ENCODE measurements at regions of chr1 and their contacts with region 1.

Region 1: GRCh38 chr1:17419626-17420328 is 19.7 kb downstream of the RCC2 start:
- DNase-seq: peak; percentile 71
- H3K4me3 Mint-ChIP-seq: no peak overlapping the region
- H3K27ac Mint-ChIP-seq: peak overlapping the region; percentile 15
- H3K4me1 Mint-ChIP-seq: peaks cover 2% of the 10 kb centered on the region
- H3K27me3 Mint-ChIP-seq: no peaks in the 10 kb centered on the region

Region 2: DNA sequence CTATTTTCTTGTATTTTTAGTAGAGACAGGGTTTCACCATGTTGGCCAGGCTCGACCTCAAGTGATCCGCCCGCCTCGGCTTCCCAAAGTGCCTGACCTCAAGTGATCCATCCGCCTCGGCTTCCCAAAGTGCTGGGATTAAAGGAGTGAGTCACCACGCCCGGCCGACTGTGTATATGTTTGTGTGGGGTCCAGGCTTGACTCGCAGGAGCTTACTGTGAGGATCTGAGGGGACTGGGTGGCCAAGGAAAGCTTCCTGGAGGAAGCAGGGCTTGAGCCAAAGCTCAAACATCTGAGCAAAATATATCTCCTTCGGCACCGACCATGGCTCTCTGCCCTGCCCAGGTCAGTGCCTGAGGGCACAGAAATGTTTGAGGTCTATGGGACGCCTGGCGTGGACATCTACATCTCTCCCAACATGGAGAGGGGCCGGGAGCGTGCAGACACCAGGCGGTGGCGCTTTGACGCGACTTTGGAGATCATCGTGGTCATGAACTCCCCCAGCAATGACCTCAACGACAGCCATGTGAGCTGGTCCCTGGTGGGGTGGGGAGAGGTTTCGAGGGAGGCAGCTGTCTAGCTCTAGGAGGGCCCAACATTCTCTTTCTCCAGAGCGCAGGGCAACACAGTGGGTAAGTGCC is 160.4 kb before region 1 on chr1:
- CTCF ChIA-PET with region 1: no interaction called
- POLR2A ChIA-PET with region 1: no interaction called
- intact Hi-C with region 1: no loop called
- DNase-seq: no peak
- H3K4me3 Mint-ChIP-seq: no peak overlapping the region
- H3K27ac Mint-ChIP-seq: no peak overlapping the region
- H3K4me1 Mint-ChIP-seq: no peaks in the 10 kb centered on the region
- H3K27me3 Mint-ChIP-seq: peaks cover 6% of the 10 kb centered on the region

Region 3: DNA sequence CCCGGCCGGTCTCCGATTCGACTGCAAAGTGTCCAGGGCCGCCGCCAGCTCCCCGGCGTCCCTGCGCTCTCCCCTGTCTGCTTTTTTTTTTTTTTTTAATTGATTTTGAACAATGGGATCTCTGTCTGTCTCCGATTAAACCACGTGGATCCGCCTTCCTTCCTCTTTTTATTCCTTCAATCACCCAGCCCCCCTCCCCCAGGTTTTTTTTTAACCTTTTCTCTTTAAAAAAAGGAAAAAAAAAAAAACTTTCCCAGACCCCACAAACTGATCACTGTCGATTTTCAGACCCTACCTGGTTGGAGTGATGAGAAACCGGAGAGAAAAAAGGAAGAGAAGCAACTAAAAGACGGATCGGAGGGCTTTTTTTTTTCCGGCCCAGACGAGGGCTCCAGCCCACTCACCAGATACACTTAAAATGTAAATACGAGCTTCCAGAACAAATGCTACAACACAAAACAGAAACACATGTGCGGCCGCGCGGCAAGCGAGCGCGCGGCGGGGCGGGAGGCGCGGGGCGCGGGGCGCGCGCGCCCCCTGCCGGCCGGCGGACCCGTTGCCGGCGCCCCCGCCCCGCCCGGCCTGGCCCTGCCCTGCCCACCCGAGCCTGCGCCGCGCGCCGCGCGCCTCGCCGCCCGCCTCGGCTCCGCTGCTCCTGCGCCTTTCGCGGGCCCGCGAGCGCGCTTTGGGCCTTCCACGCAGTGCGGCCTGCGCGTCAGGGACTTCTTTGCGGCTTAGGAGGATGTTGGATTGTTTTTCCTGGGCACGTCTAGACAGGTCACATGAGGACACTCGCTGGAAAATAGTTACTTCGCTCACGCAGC is 19.7 kb after region 1 on chr1 and contains the start of gene RCC2:
- CTCF ChIA-PET with region 1: interaction called, 10 read pairs
- POLR2A ChIA-PET with region 1: no interaction called
- intact Hi-C with region 1: loop called (anchors 2 kb)
- DNase-seq: peak; percentile 79
- H3K4me3 Mint-ChIP-seq: peak within 1 kb of the TSS; percentile 88
- H3K27ac Mint-ChIP-seq: peak within 1 kb of the TSS; percentile 95
- H3K4me1 Mint-ChIP-seq: peaks cover 43% of the 10 kb centered on the region
- H3K27me3 Mint-ChIP-seq: no peaks in the 10 kb centered on the region
- total RNA-seq, gene RCC2: 90.6 to 91.0 TPM

Region 4: DNA sequence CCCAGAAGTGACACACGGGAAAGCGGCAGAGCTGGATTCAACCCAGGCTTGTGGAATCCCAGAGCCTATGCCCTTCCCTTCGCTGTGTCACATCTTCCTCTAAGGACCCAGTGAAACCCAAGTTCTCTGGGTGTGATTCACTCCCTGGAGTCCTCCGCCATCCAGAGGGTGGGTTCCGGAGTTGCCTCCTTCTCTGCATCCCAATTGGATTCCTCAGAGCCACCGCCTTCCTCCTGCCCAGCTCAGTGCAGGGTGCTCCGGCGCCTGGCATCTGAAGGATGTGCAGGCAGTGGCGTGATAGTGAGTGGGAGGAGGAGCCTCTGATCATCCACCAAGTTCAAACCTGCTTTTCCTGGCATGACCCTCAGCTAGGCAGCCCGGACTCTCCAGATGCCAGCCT is 40.5 kb after region 1 on chr1:
- CTCF ChIA-PET with region 1: no interaction called
- POLR2A ChIA-PET with region 1: no interaction called
- intact Hi-C with region 1: no loop called
- DNase-seq: no peak
- H3K4me3 Mint-ChIP-seq: no peak overlapping the region
- H3K27ac Mint-ChIP-seq: no peak overlapping the region
- H3K4me1 Mint-ChIP-seq: no peaks in the 10 kb centered on the region
- H3K27me3 Mint-ChIP-seq: peaks cover 2% of the 10 kb centered on the region

Region 5: DNA sequence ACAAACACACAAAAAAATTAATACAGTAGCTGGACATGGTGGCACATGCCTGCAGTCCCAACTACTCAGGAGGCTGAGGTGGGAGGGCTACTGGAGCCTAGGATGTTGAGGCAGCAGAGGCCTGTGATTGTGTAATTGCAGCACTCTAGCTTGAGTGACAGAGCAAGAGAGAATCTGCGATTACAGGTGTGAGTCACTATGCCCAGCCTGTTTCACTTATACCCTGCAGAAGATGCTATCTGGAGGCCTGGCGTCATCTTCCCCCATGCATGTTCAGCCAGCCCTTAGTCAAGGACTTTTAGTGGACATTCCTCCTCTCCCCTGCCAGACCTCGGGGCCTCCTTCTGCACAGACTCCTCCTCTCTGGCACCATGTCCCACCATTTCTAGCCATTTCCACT is 56.0 kb after region 1 on chr1:
- CTCF ChIA-PET with region 1: interaction called, 4 read pairs
- POLR2A ChIA-PET with region 1: no interaction called
- intact Hi-C with region 1: loop called (anchors 10 kb)
- DNase-seq: peak; percentile 10
- H3K4me3 Mint-ChIP-seq: no peak overlapping the region
- H3K27ac Mint-ChIP-seq: no peak overlapping the region
- H3K4me1 Mint-ChIP-seq: no peaks in the 10 kb centered on the region
- H3K27me3 Mint-ChIP-seq: no peaks in the 10 kb centered on the region

Measured in activated CD4-positive, alpha-beta memory T cell treated with anti-CD3 and anti-CD28 coated beads for 36 hours (primary cell).